Naive thymus-derived CD8-positive, alpha-beta T cell (primary cell): ENCODE measurements at regions of chr14 and their contacts with region 1.

Region 1: GRCh38 chr14:51846631-51847488 is 13.6 kb upstream of the GNG2 start:
- DNase-seq: peak; percentile 65 to 98 (median 93)
- ATAC-seq: peak; percentile 82 to 85
- H3K4me3 Mint-ChIP-seq: peak overlapping the region; percentile 78 to 91 (median 88)
- H3K27ac Mint-ChIP-seq: peak overlapping the region; percentile 96 to 100 (median 99)
- H3K4me1 Mint-ChIP-seq: peaks cover 18 to 91% (median 54%) of the 10 kb centered on the region in 4 donors
- H3K27me3 Mint-ChIP-seq: peaks cover 0 to 4% (median 0%) of the 10 kb centered on the region in 5 donors

Region 2: DNA sequence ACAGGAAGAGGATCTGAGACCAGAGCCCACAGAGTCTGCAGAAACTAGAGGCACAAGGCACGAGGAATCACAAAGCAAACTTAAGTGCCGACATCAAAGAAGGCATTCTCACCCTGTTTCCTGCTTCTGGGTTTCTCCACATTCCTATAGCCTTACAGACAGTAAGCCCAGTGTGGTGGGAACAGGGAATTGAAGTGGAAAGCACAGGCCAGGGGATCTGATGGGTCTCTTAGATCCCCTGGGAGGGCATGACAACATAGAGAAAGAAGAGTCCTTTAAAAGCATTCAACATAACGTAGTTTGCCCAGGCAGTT is 270.8 kb before region 1 on chr14:
- POLR2A ChIA-PET with region 1: no interaction called
- DNase-seq: no peak
- ATAC-seq: no peak
- H3K4me3 Mint-ChIP-seq: no peak overlapping the region
- H3K27ac Mint-ChIP-seq: no peak overlapping the region
- H3K4me1 Mint-ChIP-seq: peaks cover 0 to 3% (median 0%) of the 10 kb centered on the region in 4 donors
- H3K27me3 Mint-ChIP-seq: peaks cover 12 to 66% (median 36%) of the 10 kb centered on the region in 5 donors

Region 3: GRCh38 chr14:51834240-51834639 is 12.6 kb before region 1 on chr14:
- POLR2A ChIA-PET with region 1: no interaction called
- DNase-seq: no peak
- ATAC-seq: no peak
- H3K4me3 Mint-ChIP-seq: no peak overlapping the region
- H3K27ac Mint-ChIP-seq: no peak overlapping the region
- H3K4me1 Mint-ChIP-seq: no peaks in the 10 kb centered on the region
- H3K27me3 Mint-ChIP-seq: no peaks in the 10 kb centered on the region

Region 4: GRCh38 chr14:51860164-51860824 is 13.4 kb after region 1 on chr14 and contains the start of gene GNG2:
- POLR2A ChIA-PET with region 1: interaction called, 94 read pairs
- DNase-seq: peak; percentile 71 to 92 (median 80)
- ATAC-seq: peak; percentile 95 to 96
- H3K4me3 Mint-ChIP-seq: peak within 1 kb of the TSS; percentile 81 to 99 (median 94)
- H3K27ac Mint-ChIP-seq: peak within 1 kb of the TSS; percentile 93 to 99 (median 98)
- H3K4me1 Mint-ChIP-seq: peaks cover 35 to 79% (median 64%) of the 10 kb centered on the region in 4 donors
- H3K27me3 Mint-ChIP-seq: no peaks in the 10 kb centered on the region
- polyA plus RNA-seq, gene GNG2: 115 to 172 (median 122) TPM

Region 5: GRCh38 chr14:51867741-51868140 is 20.9 kb after region 1 on chr14:
- POLR2A ChIA-PET with region 1: interaction called, 94 read pairs
- DNase-seq: no peak
- ATAC-seq: peak; percentile 27 to 43
- H3K4me3 Mint-ChIP-seq: no peak overlapping the region
- H3K27ac Mint-ChIP-seq: no peak overlapping the region
- H3K4me1 Mint-ChIP-seq: peaks cover 27 to 47% (median 42%) of the 10 kb centered on the region in 4 donors
- H3K27me3 Mint-ChIP-seq: no peaks in the 10 kb centered on the region